ENCODE measurements at regions of chr12 and their contacts with region 1.

Region 1: DNA sequence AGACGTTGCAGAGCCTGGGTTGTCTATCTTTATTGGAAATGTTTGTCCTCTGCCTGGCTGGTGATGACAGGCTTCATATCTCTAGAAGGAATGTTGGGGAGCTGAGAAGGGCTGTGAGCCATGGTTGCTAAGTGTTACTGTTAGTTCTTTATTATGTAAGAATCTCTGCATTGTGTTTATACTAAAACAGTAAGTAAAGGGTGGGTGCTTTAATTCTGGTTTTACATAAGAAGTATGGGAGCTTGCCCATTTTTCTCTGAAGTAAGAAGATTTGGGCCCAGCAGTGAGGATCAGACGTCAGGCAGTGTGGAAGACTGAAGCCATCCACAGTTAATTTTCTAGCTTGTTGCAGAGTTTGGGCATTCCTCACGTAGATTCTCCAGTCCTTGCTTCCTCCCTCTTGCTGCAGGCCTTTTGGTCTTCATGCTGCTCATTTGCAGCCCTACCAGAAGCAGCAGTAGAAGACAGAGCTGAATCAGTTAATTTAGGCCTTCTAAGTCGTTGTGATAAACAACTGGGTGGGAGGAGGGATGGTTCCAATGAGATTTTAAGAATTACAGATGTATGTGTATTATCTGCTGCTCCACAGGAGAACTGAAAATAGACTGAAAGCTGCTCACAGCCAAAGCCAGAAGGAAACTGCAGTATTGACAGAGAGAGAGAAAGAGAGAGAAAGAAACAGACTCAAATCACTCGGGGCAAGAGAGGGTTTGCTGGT is 21.4 kb downstream of the WNT5B start:
- DNase-seq: no peak

Region 2: GRCh38 chr12:1576410-1577241 is 73.8 kb before region 1 on chr12:
- intact Hi-C with region 1: no loop called
- DNase-seq: no peak

Region 3: DNA sequence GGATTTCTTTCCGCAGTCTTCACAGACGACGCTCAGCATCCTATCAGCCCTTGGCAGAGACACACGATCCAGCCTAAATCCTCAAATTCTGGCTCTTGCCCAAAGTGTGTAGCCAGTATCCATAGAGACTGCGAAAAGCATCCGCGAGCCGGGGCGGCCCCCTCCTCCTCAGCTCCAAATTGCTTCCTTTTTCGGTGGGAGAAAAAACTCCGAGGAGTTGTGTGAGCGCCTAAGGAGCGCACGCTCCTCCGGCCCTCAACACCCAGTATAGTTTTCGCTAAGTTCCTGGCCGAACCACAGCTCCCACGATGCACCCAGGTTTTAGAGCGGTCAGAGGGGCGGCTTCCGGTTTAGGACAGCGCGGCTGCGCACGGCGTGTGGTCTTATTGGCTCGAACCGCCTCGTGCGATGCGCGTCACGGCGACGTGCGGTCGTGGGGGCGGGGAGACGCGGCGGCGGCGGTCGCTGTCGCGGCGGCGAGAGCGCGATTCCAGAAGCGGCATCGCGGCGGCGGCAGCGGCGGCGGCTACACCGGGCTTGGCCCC is 40.2 kb after region 1 on chr12 and contains the start of gene ADIPOR2:
- intact Hi-C with region 1: loop called (anchors 5 kb)
- DNase-seq: peak; percentile 86 to 97 (median 93)

Measured in head of caudate nucleus (tissue), 42 donors.